Right ventricle myocardium superior (tissue), 1 donor: ENCODE measurements at regions of chr2 and their contacts with region 1.

Region 1: DNA sequence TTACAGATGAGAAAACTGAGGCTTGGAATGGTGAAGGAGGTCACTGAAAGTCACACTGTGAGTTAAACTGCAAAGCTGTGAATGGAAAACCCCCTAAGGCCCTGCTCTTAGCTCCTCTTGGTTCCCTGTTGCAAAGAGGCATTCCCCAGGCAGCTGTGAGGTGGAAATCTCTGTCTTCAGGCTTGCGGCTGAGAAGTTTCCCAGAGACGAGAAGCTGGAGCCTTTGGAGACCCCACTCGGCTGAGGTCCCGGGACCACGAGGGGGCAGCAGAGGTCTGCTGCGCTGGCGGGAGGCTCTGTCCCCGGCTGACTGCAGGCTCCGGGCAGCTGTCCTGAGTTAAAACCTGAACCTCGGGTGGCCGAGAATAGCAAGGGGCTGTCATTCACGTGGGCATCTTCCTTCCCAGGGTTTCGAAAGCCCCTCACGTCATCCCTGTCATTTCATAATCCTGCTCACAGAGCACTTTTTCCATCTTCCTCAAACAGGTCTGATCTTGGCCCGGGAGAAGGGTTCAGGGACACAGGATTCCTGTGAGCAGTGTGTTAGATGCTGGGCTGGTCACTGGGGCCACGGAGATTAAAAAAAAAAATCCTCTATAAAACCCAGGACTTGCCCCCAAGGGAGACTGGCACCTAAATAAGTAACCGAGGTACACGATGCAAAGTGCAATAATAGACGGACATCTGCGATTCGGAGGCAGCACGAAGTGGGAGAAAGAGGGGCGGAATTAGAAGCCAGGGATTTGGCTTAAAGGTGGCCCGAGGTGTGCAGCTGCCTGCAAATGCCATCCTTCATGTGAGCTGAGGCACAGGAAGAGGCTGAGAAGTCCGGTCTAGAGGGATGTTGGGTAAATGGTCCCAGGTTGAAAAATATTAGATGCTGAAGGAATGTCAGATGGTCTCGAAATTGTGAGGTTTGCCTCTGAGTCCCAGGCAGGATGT is 24.6 kb upstream of the ATOH8 start:
- DNase-seq: peak; percentile 94
- ATAC-seq: peak; percentile 97

Region 2: GRCh38 chr2:85595301-85596025 is 133.7 kb before region 1 on chr2 and contains the start of gene RNF181:
- intact Hi-C with region 1: no loop called
- DNase-seq: peak; percentile 95
- ATAC-seq: peak; percentile 96
- total RNA-seq, gene RNF181: 74.5 TPM

Region 3: DNA sequence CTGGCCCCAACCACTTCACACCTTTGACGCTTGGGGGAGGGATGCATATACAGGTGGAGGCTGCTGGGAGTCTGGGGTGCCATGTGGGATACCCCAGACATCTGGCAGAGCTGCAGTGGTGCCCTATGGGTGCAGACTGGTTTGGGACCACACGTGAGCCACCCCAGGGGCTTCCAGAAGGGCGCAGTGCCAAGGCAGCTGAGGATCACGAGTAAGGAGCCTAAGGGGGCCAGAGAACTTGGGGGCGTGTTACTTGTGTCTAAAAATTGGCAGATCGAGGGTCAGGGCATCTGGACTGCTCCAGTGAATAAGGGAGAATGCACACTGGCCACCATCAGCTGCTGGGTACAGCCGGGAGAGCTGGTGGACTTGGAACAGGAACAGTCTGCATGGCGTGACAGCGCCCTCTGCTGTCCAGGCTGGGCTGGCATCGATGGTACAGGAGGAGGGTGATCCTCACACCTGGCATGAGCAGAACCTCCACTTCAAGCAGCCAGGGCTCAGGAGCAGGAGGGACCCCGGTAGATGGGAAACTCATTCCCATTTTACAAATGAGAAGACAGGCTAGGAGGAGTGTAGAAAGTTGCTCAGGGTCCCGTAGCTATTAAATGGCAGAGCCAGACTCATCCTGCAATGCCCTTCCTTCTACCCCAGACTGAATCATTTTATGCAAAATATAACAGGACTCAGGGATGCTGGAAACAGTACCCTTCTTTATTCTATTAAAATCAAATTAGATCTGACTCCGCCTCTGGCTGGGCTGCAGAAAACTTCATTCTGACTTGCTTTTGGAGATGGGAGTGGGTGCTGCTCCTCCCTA is 85.0 kb after region 1 on chr2:
- intact Hi-C with region 1: loop called (anchors 2 kb)
- DNase-seq: peak; percentile 95
- ATAC-seq: peak; percentile 97

Region 4: GRCh38 chr2:86028766-86029381 is 299.7 kb after region 1 on chr2:
- intact Hi-C with region 1: no loop called
- DNase-seq: peak; percentile 96
- ATAC-seq: peak; percentile 98